ENCODE measurements at regions of chr12 and their contacts with region 1.

Region 1: GRCh38 chr12:57452937-57453509 is 2.1 kb upstream of the INHBE start:
- DNase-seq: peak; percentile 47 to 73
- H3K4me3 ChIP-seq: no peak overlapping the region
- H3K27ac ChIP-seq: no peak overlapping the region
- H3K4me1 ChIP-seq: peaks cover 35% of the 10 kb centered on the region
- H3K27me3 ChIP-seq: no peaks in the 10 kb centered on the region
- CTCF ChIP-seq: peak; percentile 91

Region 2: DNA sequence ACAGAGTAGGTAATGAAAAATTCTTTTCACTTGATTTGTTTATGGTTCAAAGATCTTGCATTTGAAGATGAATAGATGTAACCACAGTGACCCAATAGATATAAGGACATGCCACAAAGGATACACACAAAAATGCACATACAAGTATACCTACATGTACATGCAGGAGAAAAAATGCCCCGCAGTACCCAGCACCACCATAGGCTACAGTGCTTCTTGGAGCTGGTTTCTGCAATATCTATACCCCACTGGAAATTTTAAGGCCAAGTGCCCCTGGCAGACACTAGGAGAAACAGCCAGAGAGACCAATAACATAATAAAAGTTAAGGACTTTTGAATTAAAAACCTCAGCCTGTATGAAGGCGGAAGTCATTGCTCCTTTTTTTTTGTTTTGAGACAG is 189.9 kb before region 1 on chr12:
- CTCF ChIA-PET with region 1: interaction called, 30 read pairs
- POLR2A ChIA-PET with region 1: interaction called, 4 read pairs
- intact Hi-C with region 1: loop called (anchors 1 kb)
- DNase-seq: no peak
- H3K4me3 ChIP-seq: no peak overlapping the region
- H3K27ac ChIP-seq: no peak overlapping the region
- H3K4me1 ChIP-seq: no peaks in the 10 kb centered on the region
- H3K27me3 ChIP-seq: no peaks in the 10 kb centered on the region
- CTCF ChIP-seq: no peak

Region 3: DNA sequence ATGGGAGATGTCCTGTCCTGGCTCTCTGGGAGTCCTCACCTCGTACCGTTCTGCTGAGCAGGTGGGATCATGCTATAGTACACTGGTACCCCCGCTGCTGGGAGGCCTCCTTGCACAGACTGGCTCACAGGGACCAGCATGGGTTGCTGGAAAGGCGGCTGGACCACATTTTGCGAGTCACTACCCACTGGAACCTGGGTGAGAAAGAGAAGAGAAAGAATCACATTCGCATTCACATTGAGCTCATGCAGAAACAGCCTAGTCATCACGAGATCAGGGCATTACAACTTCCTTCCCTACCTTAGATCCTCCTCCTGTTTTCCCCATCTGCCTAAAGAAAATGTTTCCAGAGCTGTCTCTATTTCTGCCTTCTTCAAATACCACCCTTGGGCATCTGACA is 184.8 kb before region 1 on chr12:
- CTCF ChIA-PET with region 1: interaction called, 30 read pairs
- POLR2A ChIA-PET with region 1: interaction called, 4 read pairs
- intact Hi-C with region 1: loop called (anchors 1 kb)
- DNase-seq: no peak
- H3K4me3 ChIP-seq: no peak overlapping the region
- H3K27ac ChIP-seq: no peak overlapping the region
- H3K4me1 ChIP-seq: no peaks in the 10 kb centered on the region
- H3K27me3 ChIP-seq: no peaks in the 10 kb centered on the region
- CTCF ChIP-seq: no peak

Region 4: DNA sequence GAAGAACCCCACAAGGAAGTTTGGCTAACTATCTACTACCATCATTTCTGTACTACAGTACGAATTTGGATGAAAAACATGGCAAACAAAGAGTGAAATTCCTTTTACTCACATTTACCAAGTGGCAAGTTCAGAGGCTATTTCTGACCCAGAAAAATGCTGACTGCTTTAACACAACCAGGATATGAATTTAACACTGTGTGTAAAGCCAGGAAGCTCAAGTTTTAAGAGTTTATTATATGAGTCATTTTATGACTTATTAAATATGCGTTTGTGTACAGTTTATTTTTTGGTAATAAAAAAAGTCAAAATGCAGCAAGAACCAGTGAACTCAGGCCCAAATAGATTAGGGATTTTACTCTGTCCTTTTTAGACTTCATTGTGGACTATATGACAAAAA is 143.6 kb before region 1 on chr12:
- CTCF ChIA-PET with region 1: interaction called, 25 read pairs
- POLR2A ChIA-PET with region 1: interaction called, 3 read pairs
- intact Hi-C with region 1: loop called (anchors 1 kb)
- DNase-seq: peak in 1 of 2 experiments; percentile 77
- H3K4me3 ChIP-seq: no peak overlapping the region
- H3K27ac ChIP-seq: peak overlapping the region; percentile 59
- H3K4me1 ChIP-seq: peaks cover 19% of the 10 kb centered on the region
- H3K27me3 ChIP-seq: no peaks in the 10 kb centered on the region
- CTCF ChIP-seq: no peak

Region 5: DNA sequence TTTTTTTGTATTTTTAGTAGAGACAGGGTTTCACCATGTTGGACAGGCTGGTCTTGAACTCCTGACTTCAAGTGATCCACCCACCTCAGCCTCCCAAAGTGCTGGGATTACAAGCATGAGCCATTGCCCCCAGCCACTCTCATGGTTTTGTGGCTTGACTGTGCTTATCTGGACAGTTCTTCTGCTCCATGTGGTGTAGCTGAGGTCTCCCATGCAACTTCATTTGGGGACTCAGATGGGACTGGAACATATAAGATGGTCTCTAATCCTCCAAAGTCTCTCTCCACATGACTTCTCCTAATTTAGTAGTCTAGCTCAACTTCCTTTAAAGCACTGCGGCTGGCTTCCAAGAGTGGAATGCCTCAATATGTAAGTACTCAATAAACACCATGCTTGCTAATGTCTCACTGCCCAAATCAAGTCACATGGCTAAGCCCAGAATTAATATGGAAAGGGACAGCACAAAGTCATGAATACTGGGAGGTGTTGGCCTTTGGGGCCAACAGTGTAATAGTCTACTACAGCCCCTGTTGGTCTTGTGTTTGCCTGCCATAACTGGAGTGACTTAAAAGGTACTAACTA is 11.1 kb before region 1 on chr12:
- CTCF ChIA-PET with region 1: interaction called, 4 read pairs
- POLR2A ChIA-PET with region 1: interaction called, 22 read pairs
- intact Hi-C with region 1: no loop called
- DNase-seq: no peak
- H3K4me3 ChIP-seq: no peak overlapping the region
- H3K27ac ChIP-seq: no peak overlapping the region
- H3K4me1 ChIP-seq: no peaks in the 10 kb centered on the region
- H3K27me3 ChIP-seq: no peaks in the 10 kb centered on the region
- CTCF ChIP-seq: no peak

Region 6: GRCh38 chr12:57552835-57553313 is 99.9 kb after region 1 on chr12:
- CTCF ChIA-PET with region 1: no interaction called
- POLR2A ChIA-PET with region 1: no interaction called
- intact Hi-C with region 1: no loop called
- DNase-seq: no peak
- H3K4me3 ChIP-seq: no peak overlapping the region
- H3K27ac ChIP-seq: no peak overlapping the region
- H3K4me1 ChIP-seq: no peaks in the 10 kb centered on the region
- H3K27me3 ChIP-seq: no peaks in the 10 kb centered on the region
- CTCF ChIP-seq: no peak

Region 7: GRCh38 chr12:58804749-58805148 is 1351.7 kb after region 1 on chr12:
- CTCF ChIA-PET with region 1: no interaction called
- POLR2A ChIA-PET with region 1: no interaction called
- intact Hi-C with region 1: no loop called
- DNase-seq: no peak
- H3K4me3 ChIP-seq: no peak overlapping the region
- H3K27ac ChIP-seq: no peak overlapping the region
- H3K4me1 ChIP-seq: no peaks in the 10 kb centered on the region
- H3K27me3 ChIP-seq: no peaks in the 10 kb centered on the region
- CTCF ChIP-seq: peak; percentile 61